Cardiac septum (tissue), 1 donor: ENCODE measurements at regions of chr4 and their contacts with region 1.

Region 1: DNA sequence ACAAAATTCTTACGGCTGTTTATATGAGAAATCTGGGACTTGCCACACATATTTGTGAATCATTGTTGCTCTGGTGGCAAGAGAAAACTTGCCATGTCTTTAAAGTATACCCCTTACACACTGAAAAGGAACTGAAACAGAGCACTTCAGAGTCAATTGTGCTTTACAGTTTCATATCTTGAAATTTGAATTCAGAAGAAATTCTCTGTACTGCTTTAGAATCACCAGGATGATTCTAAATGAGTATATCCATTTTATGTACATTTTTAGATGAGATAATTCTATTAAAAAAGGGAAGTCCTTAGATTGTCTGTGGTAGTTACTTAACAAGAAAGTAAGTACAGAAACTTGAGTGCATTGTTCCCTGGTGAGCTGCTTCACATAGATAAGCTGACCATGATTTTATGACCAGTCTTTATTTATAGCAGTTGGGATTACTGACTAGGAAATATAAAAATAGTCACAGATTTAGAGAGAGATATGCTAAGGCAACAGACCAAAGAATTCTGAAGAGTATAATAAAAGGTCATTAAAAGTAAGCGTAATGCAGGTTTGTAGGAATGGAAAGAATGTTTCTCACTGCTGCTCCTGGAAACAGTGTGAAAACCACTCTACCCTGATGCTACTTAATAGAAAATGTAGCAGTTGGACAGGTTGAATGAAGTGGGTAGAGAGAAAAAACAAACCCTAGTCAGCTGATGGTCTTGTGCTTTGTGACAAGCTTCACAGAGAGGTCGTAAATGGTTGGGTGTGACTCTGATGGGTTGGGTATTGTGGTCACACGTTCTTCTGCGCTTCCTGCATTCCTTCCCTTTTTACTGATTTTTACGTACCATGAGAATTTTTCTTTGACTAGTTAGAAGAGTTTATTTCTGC is 41.0 kb downstream of the FNIP2 start:
- DNase-seq: no peak

Region 2: DNA sequence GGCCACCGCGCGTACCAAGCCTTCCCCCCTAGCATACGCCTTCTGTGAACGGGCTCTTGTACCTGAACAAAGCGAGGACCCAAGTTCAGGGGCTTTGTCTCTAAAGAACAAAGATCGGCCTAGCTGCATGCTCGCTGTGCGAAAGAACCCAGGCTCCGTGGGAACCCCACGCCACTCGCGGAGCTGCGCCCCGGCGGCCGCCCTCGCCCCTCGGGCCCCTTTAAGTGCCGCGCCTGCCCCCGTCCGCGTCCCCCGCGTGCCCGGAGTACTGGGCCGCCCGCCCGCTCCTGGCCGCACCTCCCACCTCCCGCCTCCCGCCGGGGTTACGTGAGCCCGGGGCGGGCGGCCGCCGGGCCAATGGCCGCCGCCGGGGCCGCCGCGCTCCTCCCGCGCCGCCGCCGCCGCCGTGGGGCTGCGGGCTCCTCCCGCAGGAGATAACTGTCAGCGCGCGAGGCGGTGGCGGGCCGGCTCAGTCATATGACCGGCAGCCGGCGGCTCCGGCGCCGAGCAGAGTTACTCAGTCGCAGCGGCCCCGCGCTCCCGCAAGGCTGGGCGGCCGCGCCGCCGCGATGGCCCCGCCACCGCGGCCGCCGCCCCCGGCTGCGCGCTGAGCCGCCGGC is 41.2 kb before region 1 on chr4 and contains the start of gene FNIP2:
- intact Hi-C with region 1: loop called (anchors 2 kb)
- DNase-seq: peak; percentile 91
- total RNA-seq, gene FNIP2: 38.5 TPM

Region 3: DNA sequence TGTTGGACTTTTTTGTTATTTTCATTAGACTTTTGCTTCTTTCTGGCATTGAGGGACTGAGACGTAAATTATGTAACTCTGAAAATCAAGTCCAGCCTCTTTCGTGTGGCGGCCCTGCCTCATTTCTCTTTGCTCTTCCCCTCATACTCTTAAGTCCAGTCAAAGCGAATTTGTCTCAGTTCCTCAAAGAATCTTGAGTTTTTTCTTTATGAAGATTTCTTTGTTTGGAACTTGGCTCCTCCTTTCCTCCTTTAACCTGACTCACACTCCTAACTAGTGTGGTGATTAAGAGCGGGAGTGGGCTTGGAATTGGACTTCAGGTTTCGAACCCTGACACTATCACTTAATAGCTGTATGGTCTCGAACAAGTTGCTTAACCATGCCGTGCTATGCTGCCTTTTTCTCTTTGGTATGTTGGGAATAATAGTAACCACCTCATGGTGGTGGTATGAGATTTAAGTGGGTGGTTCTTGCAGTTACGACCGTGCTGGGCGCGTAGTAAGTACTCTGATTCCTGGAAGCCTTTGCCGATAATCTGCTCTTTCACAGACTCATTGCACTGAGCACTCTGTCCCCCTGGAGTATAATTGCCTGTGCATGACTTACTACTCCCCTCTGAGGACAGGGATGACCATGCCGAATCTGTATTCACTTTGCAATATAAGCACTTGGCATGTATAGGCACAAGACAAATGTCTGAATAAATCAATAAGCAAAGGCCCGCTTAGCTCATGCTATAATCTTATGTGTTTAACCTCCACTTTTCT is 22.0 kb before region 1 on chr4:
- intact Hi-C with region 1: loop called (anchors 2 kb)
- DNase-seq: no peak

Region 4: DNA sequence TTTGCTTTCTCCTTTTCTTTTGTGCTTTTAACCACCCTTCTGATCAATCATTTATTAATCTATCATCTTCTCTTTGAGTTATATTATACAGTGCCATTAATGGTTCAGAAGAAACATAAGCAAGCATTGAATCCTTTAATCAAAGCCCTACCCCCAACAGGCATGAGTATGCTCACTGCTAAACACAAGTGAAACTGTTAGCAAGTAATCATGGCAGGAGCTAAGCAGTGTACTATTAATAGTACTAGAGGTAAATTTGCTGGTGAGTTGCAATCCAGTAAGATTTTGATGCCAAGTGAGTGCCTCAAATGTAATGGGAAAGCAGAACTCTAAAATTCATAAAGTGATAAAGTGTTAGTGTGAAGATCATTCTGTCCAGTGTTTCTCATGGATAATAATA is 16.2 kb after region 1 on chr4:
- intact Hi-C with region 1: loop called (anchors 2 kb)
- DNase-seq: no peak

Region 5: DNA sequence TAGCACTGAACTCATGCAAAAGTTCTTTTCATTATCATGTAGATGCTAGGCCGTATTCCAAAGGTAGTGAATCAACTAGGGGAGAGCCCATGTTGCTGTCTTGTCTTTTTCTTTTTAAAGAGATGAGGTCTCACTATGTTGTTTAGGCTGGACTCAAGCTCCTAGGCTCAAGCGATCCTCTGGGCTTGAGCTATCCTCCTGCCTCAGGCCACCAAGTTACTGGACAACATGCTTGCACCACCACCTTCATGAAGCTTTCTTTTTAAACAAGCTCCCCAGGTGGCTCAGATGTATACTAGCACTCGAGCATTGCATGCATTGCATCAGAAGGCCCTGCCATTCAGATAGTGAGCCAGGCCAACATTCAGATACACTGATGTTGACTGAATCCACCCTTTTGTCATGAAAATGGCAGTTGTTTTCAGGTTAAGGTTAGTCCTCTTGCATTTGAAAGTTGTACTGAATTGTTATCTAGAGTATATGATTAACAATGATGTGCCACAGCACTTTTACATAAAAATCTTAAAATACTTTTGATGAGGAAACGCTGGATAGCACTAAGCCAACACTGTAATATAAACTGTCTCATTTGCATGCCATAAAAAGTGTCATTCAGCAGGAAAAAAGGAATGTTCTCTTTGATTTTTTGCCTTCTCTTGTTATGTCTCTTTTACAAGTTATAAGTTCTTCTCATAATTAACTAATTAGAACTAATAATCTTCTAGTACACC is 35.6 kb after region 1 on chr4:
- intact Hi-C with region 1: loop called (anchors 5 kb)
- DNase-seq: no peak